Activated CD8-positive, alpha-beta T cell treated with anti-CD3 and anti-CD28 coated beads, Interleukin-2, amount 10 ng/mL, durations not matched to agents 7 days and 5 days (primary cell): ENCODE measurements at regions of chr3 and their contacts with region 1.

Region 1: DNA sequence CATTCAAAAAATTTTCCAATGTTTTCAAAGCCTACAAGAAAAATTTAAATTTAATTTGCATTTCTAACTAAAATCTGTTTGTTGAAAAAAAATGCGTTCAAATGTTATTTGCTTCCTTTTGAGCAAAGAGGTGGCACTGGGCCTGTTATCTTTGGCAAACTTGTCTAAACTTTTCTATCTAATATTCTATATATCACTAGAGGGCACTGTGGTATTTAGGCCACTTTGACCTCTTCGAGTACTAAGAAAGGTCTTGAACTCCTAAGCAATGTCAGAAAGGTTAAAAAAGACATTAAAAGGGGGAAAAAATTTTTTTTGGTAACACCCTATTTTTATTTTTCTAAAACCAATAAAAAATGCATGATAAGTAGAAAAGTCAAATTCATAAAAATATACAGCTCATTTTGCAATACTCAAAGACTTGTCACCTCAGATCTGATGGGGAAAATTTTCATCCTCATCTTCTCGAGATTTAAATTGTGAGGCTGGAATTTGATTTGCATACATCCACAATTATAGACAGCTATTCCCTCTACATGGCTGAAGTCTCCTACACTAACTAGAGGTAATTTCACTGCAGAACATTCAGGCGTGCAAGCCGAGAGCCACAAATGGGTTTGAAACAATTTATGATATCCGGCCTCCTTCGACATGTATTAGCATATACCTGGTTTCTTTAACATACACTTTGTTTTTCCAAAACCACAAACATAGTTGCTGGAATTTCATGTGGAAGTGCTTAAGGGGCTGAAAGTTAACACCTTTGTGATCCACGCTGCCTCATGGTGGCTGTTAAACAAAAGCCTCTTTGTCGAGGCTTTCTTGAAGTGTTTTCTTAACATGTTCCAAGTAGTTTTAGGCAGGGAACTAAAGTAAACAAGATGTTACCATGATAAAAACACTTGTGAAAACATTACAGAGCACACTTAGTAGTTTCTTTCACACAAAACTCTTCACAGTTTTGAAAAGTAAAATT is 576.4 kb downstream of the FOXP1 start:
- DNase-seq: no peak
- ATAC-seq: no peak
- H3K4me3 Mint-ChIP-seq: no peak overlapping the region
- H3K27ac Mint-ChIP-seq: no peak overlapping the region
- H3K4me1 Mint-ChIP-seq: peaks cover 56% of the 10 kb centered on the region
- H3K27me3 Mint-ChIP-seq: no peaks in the 10 kb centered on the region

Region 2: DNA sequence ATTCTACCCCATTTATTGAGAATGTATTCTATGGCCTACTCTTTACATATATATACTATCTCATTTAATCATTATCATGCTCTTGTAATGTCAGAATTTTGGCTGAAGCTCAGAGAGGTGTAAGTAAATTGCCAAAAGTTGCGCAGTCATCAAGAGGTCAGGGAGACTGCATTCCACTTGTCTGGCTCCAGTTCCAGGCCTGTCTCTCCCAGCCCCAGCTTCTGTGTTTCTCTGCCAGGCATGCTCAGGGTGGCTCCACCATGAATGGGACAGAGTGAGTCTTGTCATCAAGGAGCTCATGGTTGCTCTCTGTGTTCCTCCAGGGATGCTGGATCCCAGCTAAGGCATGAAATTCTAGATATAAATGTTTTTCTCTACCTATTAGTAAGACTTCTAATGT is 59.5 kb before region 1 on chr3:
- CTCF ChIA-PET with region 1: no interaction called
- POLR2A ChIA-PET with region 1: no interaction called
- DNase-seq: no peak
- ATAC-seq: no peak
- H3K4me3 Mint-ChIP-seq: no peak overlapping the region
- H3K27ac Mint-ChIP-seq: no peak overlapping the region
- H3K4me1 Mint-ChIP-seq: no peaks in the 10 kb centered on the region
- H3K27me3 Mint-ChIP-seq: no peaks in the 10 kb centered on the region

Region 3: DNA sequence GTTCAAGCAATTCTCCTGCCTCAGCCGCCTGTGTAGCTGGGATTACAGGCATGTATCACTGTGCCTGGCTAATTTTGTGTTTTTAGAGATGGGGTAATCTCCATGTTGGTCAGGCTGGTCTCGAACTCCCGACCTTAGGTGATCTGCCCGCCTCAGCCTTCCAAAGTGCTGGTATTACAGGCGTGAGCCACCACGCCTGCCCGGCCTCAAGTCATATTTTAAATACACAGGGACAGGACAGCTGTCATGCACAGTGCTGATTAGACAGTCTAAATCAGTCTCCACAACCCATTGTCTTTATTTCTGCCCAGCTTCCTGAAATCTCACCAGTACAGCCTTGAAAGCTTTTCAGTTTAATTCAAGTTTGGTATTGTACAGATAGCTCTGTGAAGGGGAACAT is 11.0 kb before region 1 on chr3:
- CTCF ChIA-PET with region 1: interaction called, 11 read pairs
- POLR2A ChIA-PET with region 1: interaction called, 3 read pairs
- DNase-seq: no peak
- ATAC-seq: no peak
- H3K4me3 Mint-ChIP-seq: no peak overlapping the region
- H3K27ac Mint-ChIP-seq: no peak overlapping the region
- H3K4me1 Mint-ChIP-seq: peaks cover 19% of the 10 kb centered on the region
- H3K27me3 Mint-ChIP-seq: no peaks in the 10 kb centered on the region